Heart right ventricle (tissue), 16 donors: ENCODE measurements at regions of chr4 and their contacts with region 1.

Region 1: GRCh38 chr4:48830706-48831531 is at the start of gene OCIAD1:
- DNase-seq: peak; percentile 92 to 98
- ATAC-seq: peak; percentile 100
- H3K4me3 ChIP-seq: peak within 1 kb of the TSS; percentile 66 to 95 (median 80)
- H3K27ac ChIP-seq: peak within 1 kb of the TSS; percentile 85 to 98 (median 94)
- H3K4me1 ChIP-seq: peaks cover 4 to 24% (median 19%) of the 10 kb centered on the region in 9 donors
- H3K27me3 ChIP-seq: peaks cover 0 to 4% (median 0%) of the 10 kb centered on the region in 7 donors
- CTCF ChIP-seq: no peak
- total RNA-seq, gene OCIAD1: 131 to 183 (median 161) TPM

Region 2: DNA sequence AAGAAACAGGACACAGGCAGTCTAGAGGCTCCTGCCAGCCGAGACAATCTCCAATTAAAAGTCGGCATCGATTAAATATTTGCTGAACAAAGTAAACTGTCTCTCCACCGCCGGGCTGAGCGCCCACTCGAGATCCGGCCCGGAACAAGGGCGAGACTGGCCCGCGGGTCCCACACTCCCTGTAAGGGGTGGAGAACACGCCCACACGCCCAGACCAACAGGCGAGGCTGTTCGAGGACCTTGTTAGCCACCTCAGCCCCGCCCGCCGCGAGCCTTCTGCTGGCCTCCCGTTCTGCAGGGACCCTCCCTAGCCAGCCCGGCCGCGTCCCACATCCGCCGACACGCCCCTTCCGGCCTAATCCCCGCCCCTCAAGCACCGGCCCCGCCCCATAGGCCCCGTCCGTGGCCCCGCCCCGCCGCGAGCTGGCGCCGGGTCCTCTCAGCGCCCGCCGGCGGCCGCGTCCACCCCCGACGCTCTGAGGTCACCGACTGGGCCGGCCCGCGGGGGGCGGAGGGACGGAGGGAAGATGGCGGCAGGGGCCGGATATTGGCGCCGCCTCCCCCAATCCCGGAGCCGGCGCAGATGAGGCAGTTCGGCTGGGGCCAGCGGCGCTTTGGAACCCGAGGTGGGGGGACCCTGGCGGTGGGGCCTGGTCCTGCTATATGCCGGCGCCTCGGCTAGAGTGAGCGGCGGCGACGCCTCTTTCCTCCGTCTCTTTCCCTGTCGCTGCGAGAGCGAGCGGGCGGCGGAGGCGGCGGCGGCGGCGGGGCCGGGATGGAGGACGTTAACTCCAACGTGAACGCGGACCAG is 489.7 kb before region 1 on chr4 and contains the start of gene SLAIN2:
- intact Hi-C with region 1: loop called in 1 of 10 experiments (anchors 5 kb)
- DNase-seq: peak; percentile 99 to 100
- ATAC-seq: peak; percentile 94 to 98 (median 96)
- H3K4me3 ChIP-seq: peak within 1 kb of the TSS; percentile 83 to 96 (median 93)
- H3K27ac ChIP-seq: peak within 1 kb of the TSS; percentile 95 to 99 (median 99)
- H3K4me1 ChIP-seq: peaks cover 0 to 58% (median 37%) of the 10 kb centered on the region in 9 donors
- H3K27me3 ChIP-seq: no peaks in the 10 kb centered on the region
- CTCF ChIP-seq: peak in 8 of 9 donors; percentile 19 to 54 (median 38)
- total RNA-seq, gene SLAIN2: 100 to 185 (median 135) TPM

Region 3: GRCh38 chr4:48526406-48526805 is 304.5 kb before region 1 on chr4:
- intact Hi-C with region 1: no loop called
- DNase-seq: no peak
- ATAC-seq: no peak
- H3K4me3 ChIP-seq: no peak overlapping the region
- H3K27ac ChIP-seq: no peak overlapping the region
- H3K4me1 ChIP-seq: no peaks in the 10 kb centered on the region
- H3K27me3 ChIP-seq: no peaks in the 10 kb centered on the region
- CTCF ChIP-seq: no peak

Region 4: GRCh38 chr4:48588230-48589097 is 242.5 kb before region 1 on chr4:
- intact Hi-C with region 1: loop called in 2 of 10 experiments (anchors 5 to 10 kb)
- DNase-seq: no peak
- ATAC-seq: peak in 1 of 8 donors; percentile 10
- H3K4me3 ChIP-seq: no peak overlapping the region
- H3K27ac ChIP-seq: peak overlapping the region in 2 of 10 donors; percentile 16 to 50
- H3K4me1 ChIP-seq: peaks cover 0 to 42% (median 17%) of the 10 kb centered on the region in 9 donors
- H3K27me3 ChIP-seq: no peaks in the 10 kb centered on the region
- CTCF ChIP-seq: no peak

Region 5: DNA sequence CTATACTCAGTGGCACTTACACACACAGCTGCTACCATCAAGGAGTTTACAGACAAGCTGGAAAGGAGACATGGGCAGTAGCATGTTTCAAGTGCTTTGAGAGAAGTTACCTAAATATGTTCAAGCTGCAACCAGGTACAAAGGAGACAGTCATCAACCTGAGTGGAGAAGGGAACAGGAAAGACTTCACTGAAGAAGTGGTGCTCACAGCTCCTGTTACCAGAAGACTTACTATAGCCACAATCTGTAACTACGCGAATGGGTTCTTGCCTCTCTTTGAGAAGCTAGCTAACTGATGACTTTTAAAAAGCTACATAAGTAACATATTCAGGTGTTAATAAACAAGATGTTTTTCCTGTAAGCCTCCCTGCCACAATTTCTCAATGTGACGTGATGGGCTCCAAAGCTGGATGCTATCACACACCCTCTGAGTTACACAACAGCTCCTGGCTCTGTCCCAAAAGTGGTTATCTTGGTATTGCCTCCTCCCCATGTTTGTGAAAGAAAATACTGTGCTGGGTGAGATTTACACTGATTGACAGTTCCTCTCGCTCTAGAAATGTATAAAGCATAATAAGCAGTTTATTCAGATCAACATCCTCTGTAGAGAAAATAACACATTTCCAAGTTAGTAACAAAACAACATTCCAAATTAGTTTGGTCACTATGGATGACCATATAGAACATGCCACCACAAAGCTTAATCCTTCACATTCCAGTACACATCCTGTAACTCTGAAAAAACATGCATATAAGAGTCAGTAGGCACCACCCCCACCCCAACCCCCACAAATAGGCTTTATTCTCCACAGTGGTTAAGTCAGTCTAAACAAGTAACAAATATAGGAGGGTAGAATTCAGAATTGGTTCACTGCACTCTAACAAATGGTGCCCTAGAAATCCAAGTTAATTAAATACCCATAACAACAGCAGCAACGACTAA is 132.6 kb before region 1 on chr4:
- intact Hi-C with region 1: loop called in 1 of 10 experiments (anchors 10 kb)
- DNase-seq: peak in 1 of 2 donors; percentile 63
- ATAC-seq: peak in 7 of 8 donors; percentile 69 to 94 (median 86)
- H3K4me3 ChIP-seq: no peak overlapping the region
- H3K27ac ChIP-seq: no peak overlapping the region
- H3K4me1 ChIP-seq: peaks cover 0 to 54% (median 25%) of the 10 kb centered on the region in 9 donors
- H3K27me3 ChIP-seq: no peaks in the 10 kb centered on the region
- CTCF ChIP-seq: no peak